CD4-positive, alpha-beta memory T cell (primary cell): ENCODE measurements at regions of chr11 and their contacts with region 1.

Region 1: GRCh38 chr11:95863486-95864140 is 60.3 kb downstream of the MTMR2 start:
- DNase-seq: no peak
- H3K4me3 ChIP-seq: no peak overlapping the region
- H3K4me3 Mint-ChIP-seq: no peak overlapping the region
- H3K27ac ChIP-seq: no peak overlapping the region
- H3K27ac Mint-ChIP-seq: no peak overlapping the region
- H3K4me1 ChIP-seq: no peaks in the 10 kb centered on the region
- H3K4me1 Mint-ChIP-seq: no peaks in the 10 kb centered on the region
- H3K27me3 ChIP-seq: no peaks in the 10 kb centered on the region
- H3K27me3 Mint-ChIP-seq: no peaks in the 10 kb centered on the region

Region 2: DNA sequence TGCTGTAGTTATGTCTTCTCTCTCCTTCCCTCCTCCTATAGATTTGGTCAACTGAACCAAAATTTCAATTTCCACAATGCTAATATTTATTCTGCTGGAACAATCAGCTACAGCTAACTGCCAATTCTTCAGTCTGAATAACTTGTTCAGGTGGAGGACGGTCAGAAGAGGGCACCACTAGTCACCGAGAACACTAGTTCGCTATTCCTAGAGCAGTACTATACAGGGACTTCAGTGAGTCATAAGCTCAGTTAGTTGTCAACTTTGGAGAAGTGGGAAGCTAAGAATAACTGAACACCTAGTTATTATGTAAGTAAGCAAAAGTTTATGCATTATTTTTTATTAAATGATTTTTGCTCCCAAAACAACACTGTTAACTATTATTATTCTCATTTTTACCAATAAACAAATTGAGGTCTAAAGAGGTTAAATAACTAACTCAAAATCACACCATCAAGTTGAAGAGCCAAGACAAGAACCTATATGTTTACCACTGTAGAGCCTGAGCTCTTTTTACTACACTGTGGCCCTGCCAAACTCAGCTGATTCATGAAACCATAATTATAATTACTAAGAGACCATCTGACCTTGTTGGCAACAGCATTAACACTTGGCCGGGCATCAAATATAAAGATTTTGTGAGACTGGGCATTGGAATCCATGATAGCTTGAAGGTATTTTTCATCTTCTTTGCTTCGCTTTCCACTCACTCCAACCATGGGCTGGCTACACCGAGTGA is 14.4 kb before region 1 on chr11:
- CTCF ChIA-PET with region 1: interaction called, 10 read pairs
- POLR2A ChIA-PET with region 1: no interaction called
- intact Hi-C with region 1: no loop called
- DNase-seq: peak in 1 of 5 donors; percentile 16
- H3K4me3 ChIP-seq: no peak overlapping the region
- H3K4me3 Mint-ChIP-seq: no peak overlapping the region
- H3K27ac ChIP-seq: no peak overlapping the region
- H3K27ac Mint-ChIP-seq: peak overlapping the region in 1 of 7 donors; percentile 67
- H3K4me1 ChIP-seq: no peaks in the 10 kb centered on the region
- H3K4me1 Mint-ChIP-seq: no peaks in the 10 kb centered on the region
- H3K27me3 ChIP-seq: no peaks in the 10 kb centered on the region
- H3K27me3 Mint-ChIP-seq: no peaks in the 10 kb centered on the region